ENCODE measurements at regions of chr6 and their contacts with region 1.

Region 1: DNA sequence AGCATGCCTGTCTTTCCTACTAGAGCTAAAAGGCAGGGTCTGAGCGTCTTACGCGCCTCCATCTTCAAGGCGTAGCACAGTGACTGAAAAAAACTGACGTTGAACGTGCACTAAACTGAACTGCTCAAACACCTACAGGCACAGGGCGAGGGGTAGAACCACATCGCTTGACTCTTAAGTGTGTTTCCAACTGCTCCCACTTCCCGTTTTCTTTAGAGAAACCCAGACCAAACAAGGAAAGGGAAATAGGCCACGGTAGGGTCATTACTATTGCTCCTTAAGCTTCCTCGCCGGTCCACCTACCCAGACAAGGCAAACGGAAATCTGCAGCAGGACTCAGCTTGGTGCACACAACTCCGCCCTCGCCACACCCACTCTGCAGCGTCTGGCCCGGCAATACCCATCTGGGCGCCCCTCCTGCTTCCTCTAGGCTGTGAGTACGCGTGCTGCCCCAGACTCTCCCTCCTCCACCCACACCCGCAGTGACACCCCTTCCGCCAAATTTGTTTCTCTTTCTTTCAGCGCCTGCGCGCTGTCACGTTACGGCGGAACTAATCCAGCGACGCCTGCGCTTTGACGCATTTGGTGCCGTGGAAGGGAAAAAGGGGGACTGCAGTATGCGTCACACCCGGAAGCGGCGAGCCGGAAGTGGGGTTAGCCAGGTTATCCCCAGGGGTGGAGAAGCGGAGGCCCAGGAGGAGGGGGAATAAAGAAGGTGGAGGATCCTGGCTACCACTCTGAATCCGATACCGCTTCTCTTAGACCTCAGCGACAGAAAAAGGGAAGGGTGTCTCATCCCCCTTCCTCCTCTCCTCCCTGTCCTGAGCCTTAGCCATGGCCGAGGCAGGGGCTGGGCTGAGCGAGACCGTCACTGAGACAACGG is at the start of gene PPP1R11:
- DNase-seq: peak; percentile 97 to 99 (median 99)
- H3K4me3 ChIP-seq: peak within 1 kb of the TSS; percentile 75 to 89 (median 85)
- H3K4me3 Mint-ChIP-seq: peak within 1 kb of the TSS; percentile 91 to 96
- H3K27ac ChIP-seq: peak within 1 kb of the TSS; percentile 96 to 99
- H3K27ac Mint-ChIP-seq: peak within 1 kb of the TSS; percentile 99 to 100 (median 100)
- H3K4me1 ChIP-seq: peaks cover 36 to 46% of the 10 kb centered on the region in 2 donors
- H3K4me1 Mint-ChIP-seq: peaks cover 46% of the 10 kb centered on the region
- H3K27me3 ChIP-seq: peaks cover 12 to 18% of the 10 kb centered on the region in 2 donors
- H3K27me3 Mint-ChIP-seq: peaks cover 9 to 26% (median 18%) of the 10 kb centered on the region in 3 donors
- CTCF ChIP-seq: no peak
- polyA plus RNA-seq, gene PPP1R11: 49.3 to 107 (median 67.7) TPM

Region 2: DNA sequence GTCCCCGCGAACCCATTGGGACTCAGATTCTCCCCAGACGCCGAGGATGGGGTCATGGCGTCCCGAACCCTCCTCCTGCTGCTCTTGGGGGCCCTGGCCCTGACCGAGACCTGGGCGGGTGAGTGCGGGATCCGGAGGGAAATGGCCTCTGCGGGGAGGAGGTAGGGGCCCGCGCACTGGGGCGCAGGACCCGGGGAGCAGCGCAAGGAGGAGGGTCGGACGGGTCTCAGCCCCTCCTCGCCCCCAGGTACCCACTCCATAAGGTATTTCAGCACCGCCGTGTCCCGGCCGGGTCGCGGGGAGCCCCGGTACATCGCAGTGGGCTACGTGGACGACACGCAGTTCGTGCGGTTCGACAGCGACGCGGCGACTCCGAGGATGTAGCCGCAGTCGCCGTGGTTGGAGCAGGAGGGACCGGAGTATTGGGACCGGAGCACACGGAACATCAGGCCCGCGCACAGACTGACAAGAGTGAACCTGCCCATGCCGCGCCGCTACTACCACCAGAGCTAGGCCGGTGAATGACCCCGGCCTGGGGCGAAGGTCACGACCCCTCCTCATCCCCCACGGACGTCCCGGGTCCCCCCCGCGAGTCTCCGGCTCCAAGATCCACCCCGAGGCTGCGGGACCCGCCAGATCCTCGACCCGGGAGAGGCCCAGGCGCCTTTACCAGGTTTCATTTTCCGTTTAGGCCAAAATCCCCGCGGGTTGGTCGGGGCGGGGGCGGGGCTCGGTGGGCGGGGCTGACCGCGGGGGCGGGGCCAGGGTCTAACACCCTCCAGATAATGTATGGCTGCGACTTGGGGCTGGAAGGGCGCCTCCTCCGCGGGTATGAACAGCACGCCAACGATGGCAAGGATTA is 140.2 kb before region 1 on chr6:
- intact Hi-C with region 1: loop called in 1 of 2 experiments (anchors 10 kb)
- DNase-seq: peak; percentile 83 to 90 (median 84)
- H3K4me3 ChIP-seq: peak overlapping the region; percentile 63 to 93 (median 79)
- H3K4me3 Mint-ChIP-seq: peak overlapping the region in 1 of 2 donors; percentile 89
- H3K27ac ChIP-seq: peak overlapping the region; percentile 94 to 99
- H3K27ac Mint-ChIP-seq: peak overlapping the region in 6 of 7 donors; percentile 95 to 99 (median 96)
- H3K4me1 ChIP-seq: peaks cover 23 to 29% of the 10 kb centered on the region in 2 donors
- H3K4me1 Mint-ChIP-seq: peaks cover 31% of the 10 kb centered on the region
- H3K27me3 ChIP-seq: no peaks in the 10 kb centered on the region
- H3K27me3 Mint-ChIP-seq: no peaks in the 10 kb centered on the region
- CTCF ChIP-seq: no peak

Region 3: GRCh38 chr6:30102970-30103874 is 36.4 kb after region 1 on chr6:
- intact Hi-C with region 1: loop called in 1 of 2 experiments (anchors 5 kb)
- DNase-seq: peak; percentile 66 to 81 (median 79)
- H3K4me3 ChIP-seq: peak overlapping the region; percentile 2 to 77 (median 12)
- H3K4me3 Mint-ChIP-seq: peak overlapping the region; percentile 81 to 97
- H3K27ac ChIP-seq: no peak overlapping the region
- H3K27ac Mint-ChIP-seq: peak overlapping the region in 5 of 7 donors; percentile 49 to 78 (median 61)
- H3K4me1 ChIP-seq: peaks cover 34 to 38% of the 10 kb centered on the region in 2 donors
- H3K4me1 Mint-ChIP-seq: peaks cover 43% of the 10 kb centered on the region
- H3K27me3 ChIP-seq: peaks cover 48 to 68% of the 10 kb centered on the region in 2 donors
- H3K27me3 Mint-ChIP-seq: peaks cover 59 to 77% (median 64%) of the 10 kb centered on the region in 3 donors
- CTCF ChIP-seq: peak; percentile 86

Region 4: GRCh38 chr6:30212865-30213666 is 146.2 kb after region 1 on chr6 and contains the start of gene TRIM26:
- intact Hi-C with region 1: loop called in 1 of 2 experiments (anchors 5 kb)
- DNase-seq: peak; percentile 96
- H3K4me3 ChIP-seq: peak within 1 kb of the TSS; percentile 84 to 95 (median 88)
- H3K4me3 Mint-ChIP-seq: peak within 1 kb of the TSS; percentile 96 to 99
- H3K27ac ChIP-seq: peak within 1 kb of the TSS; percentile 94 to 95
- H3K27ac Mint-ChIP-seq: peak within 1 kb of the TSS; percentile 96 to 99 (median 99)
- H3K4me1 ChIP-seq: peaks cover 28 to 35% of the 10 kb centered on the region in 2 donors
- H3K4me1 Mint-ChIP-seq: peaks cover 44% of the 10 kb centered on the region
- H3K27me3 ChIP-seq: no peaks in the 10 kb centered on the region
- H3K27me3 Mint-ChIP-seq: peaks cover 0 to 2% (median 2%) of the 10 kb centered on the region in 3 donors
- CTCF ChIP-seq: no peak
- polyA plus RNA-seq, gene TRIM26: 16.4 to 26.4 (median 26.0) TPM

Region 5: DNA sequence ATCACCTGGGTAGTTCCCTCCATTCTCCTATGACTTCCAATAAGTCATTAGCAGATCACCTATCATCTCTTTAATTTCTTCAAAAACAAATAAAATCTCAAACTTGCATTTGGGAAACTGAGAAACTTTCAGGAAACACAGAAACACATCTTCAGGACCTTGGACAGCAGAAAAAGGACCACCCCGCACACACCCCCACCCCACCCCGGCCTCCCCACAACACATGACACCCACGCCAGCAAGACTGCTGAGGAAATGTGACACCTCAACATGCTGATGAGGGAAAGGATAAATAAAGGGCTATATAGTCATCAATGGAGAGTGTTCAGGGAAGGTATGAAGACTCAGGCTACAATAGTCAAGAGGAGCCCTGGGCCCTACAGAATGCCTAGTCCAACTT is 244.3 kb after region 1 on chr6:
- intact Hi-C with region 1: no loop called
- DNase-seq: no peak
- H3K4me3 ChIP-seq: no peak overlapping the region
- H3K4me3 Mint-ChIP-seq: no peak overlapping the region
- H3K27ac ChIP-seq: no peak overlapping the region
- H3K27ac Mint-ChIP-seq: no peak overlapping the region
- H3K4me1 ChIP-seq: no peaks in the 10 kb centered on the region
- H3K4me1 Mint-ChIP-seq: peaks cover 7% of the 10 kb centered on the region
- H3K27me3 ChIP-seq: no peaks in the 10 kb centered on the region
- H3K27me3 Mint-ChIP-seq: peaks cover 0 to 3% (median 0%) of the 10 kb centered on the region in 3 donors
- CTCF ChIP-seq: no peak

Region 6: DNA sequence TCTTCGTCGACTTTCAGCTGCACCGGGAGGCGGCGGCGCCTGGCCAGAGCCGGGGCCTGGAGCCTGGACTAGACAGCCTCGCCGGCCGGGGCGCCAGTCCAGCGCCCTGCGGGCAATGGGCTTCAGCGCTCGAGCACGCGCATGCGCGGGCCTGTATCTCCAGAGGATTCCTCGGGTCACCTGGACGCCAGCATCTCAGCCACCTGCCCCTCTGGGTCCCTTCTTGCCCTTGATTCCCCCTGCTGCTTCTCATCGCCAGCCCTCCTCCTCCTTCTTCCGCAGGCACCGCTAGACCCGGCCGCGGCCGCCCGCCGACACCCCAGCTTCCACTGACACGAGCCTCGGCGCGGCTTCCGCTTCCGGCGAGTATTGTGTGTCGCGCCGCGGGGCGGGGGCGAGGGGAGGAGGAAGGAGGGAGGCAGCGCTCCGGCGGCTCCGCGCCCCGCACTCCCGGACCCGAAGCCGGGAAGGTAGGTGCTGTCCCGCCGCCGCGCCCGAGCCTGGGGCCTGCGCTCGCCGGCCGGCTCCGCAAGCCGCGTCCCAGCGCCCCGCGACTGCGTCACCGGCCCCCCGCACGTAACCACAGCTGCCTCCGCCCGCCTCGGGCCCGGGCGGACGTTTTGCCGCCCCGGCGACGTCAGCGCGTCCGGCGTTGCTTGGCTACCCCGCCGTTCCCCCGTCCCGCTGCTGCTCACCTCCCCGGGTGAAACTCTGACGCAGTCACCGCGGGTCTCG is 259.9 kb after region 1 on chr6 and contains the start of gene TRIM39:
- intact Hi-C with region 1: loop called in 1 of 2 experiments (anchors 10 kb)
- DNase-seq: peak; percentile 76 to 90 (median 77)
- H3K4me3 ChIP-seq: peak within 1 kb of the TSS; percentile 78 to 89 (median 82)
- H3K4me3 Mint-ChIP-seq: peak within 1 kb of the TSS; percentile 94 to 98
- H3K27ac ChIP-seq: peak within 1 kb of the TSS; percentile 86 to 94
- H3K27ac Mint-ChIP-seq: peak within 1 kb of the TSS; percentile 96 to 99 (median 99)
- H3K4me1 ChIP-seq: peaks cover 22 to 29% of the 10 kb centered on the region in 2 donors
- H3K4me1 Mint-ChIP-seq: peaks cover 49% of the 10 kb centered on the region
- H3K27me3 ChIP-seq: no peaks in the 10 kb centered on the region
- H3K27me3 Mint-ChIP-seq: no peaks in the 10 kb centered on the region
- CTCF ChIP-seq: no peak
- polyA plus RNA-seq, gene TRIM39: 3.5 to 16.3 (median 3.6) TPM